BJ (cell line): ENCODE measurements at regions of chr2 and their contacts with region 1.

Region 1: GRCh38 chr2:43611987-43612894 is 16.4 kb upstream of the THADA start:
- DNase-seq: no peak
- H3K4me3 ChIP-seq: no peak overlapping the region
- H3K27me3 ChIP-seq: peaks cover 2% of the 10 kb centered on the region; the same call in 1 of the 2 replicates
- CTCF ChIP-seq: peak; percentile 86

Region 2: GRCh38 chr2:43595603-43596412 is 16.4 kb before region 1 on chr2 and contains the start of gene THADA:
- CTCF ChIA-PET with region 1: interaction called, 39 read pairs
- POLR2A ChIA-PET with region 1: interaction called, 6 read pairs
- DNase-seq: peak; percentile 94
- H3K4me3 ChIP-seq: peak within 1 kb of the TSS; percentile 62
- H3K27me3 ChIP-seq: no peaks in the 10 kb centered on the region
- CTCF ChIP-seq: no peak
- polyA plus RNA-seq, gene THADA: 15.2 and 21.6 TPM in 2 replicates

Region 3: DNA sequence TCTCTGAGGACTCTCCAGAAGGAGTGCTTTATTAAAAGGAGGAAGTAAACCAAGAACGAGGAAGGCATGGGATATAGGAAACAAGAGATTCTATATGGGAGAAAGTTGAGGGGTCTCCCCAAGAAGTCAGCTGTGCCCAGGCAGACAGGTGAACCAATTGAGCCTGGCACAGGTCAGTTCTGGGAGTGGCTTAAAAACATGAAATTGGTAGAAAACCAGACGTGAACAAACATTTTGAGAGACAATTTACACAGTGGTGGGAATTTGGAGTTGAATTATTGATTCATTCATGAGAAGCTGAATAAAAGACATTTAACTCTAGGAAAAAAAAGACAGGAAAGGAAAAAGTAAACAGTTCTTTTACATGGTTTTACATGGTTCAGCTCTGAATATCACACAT is 41.3 kb after region 1 on chr2:
- CTCF ChIA-PET with region 1: no interaction called
- POLR2A ChIA-PET with region 1: no interaction called
- DNase-seq: no peak
- H3K4me3 ChIP-seq: no peak overlapping the region
- H3K27me3 ChIP-seq: no peaks in the 10 kb centered on the region
- CTCF ChIP-seq: no peak